Aorta (tissue), 5 donors: ENCODE measurements at regions of chr1 and their contacts with region 1.

Region 1: GRCh38 chr1:156625436-156626078 is 6.3 kb downstream of the HAPLN2 start:
- DNase-seq: peak; percentile 65 to 89
- ATAC-seq: peak; percentile 77
- H3K4me3 ChIP-seq: no peak overlapping the region
- H3K27ac ChIP-seq: no peak overlapping the region
- H3K4me1 ChIP-seq: no peaks in the 10 kb centered on the region
- H3K27me3 ChIP-seq: no peaks in the 10 kb centered on the region

Region 2: GRCh38 chr1:156414461-156415064 is 211.0 kb before region 1 on chr1:
- intact Hi-C with region 1: no loop called
- DNase-seq: no peak
- ATAC-seq: no peak
- H3K4me3 ChIP-seq: no peak overlapping the region
- H3K27ac ChIP-seq: no peak overlapping the region
- H3K4me1 ChIP-seq: no peaks in the 10 kb centered on the region
- H3K27me3 ChIP-seq: peaks cover 0 to 1% of the 10 kb centered on the region in 2 donors

Region 3: DNA sequence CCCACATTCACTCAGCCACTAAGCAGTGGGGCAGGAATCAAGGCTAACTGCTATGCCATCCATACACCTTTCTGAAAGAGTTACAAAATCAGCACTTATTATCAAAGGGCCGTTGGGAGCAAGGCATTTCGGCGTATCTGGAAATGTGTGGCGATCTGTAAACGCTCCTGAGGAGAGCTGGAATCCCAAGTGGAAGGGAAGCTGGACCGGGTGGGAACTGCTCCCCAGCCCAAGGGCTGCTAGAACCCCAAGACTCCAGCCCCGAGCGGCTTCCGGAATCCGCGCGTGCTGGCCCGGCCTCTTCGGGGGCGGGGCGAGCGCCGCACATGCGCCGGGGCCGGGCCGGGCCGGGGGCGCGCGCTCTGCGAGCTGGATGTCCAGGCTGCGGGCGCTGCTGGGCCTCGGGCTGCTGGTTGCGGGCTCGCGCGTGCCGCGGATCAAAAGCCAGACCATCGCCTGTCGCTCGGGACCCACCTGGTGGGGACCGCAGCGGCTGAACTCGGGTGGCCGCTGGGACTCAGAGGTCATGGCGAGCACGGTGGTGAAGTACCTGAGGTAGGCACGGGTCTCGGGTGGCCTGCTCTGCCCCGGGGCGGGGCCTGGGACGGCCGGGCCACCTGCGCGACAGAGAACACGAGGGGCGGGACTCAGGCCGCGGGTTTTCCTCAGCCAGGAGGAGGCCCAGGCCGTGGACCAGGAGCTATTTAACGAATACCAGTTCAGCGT is 34.0 kb before region 1 on chr1 and contains the start of gene NAXE:
- intact Hi-C with region 1: no loop called
- DNase-seq: peak; percentile 81 to 90
- ATAC-seq: peak; percentile 94
- H3K4me3 ChIP-seq: peak within 1 kb of the TSS; percentile 71 to 77
- H3K27ac ChIP-seq: peak within 1 kb of the TSS; percentile 23 to 91
- H3K4me1 ChIP-seq: no peaks in the 10 kb centered on the region
- H3K27me3 ChIP-seq: no peaks in the 10 kb centered on the region
- total RNA-seq, gene NAXE: 41.5 to 46.0 TPM

Region 4: DNA sequence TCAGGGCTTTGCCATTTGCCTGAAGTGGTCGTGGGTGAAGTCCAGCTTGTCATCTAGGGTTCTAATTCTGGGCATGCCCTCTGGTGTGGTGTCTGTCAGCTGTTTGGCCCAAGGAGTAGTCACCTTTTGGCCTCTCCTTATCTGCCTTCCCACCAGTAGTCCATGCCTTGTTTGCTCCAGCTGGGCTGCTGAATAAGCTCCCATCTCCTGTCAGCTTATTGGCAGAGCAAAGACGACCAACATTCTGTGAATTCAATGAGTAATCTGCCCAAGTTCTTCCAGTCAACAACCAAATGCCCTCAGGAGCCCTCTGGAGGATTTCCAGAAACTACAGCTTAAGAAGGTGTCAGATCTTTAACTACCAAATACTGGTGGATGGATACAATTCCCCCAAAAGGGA is 23.4 kb after region 1 on chr1:
- intact Hi-C with region 1: loop called in 1 of 2 experiments (anchors 2 kb)
- DNase-seq: no peak
- ATAC-seq: no peak
- H3K4me3 ChIP-seq: no peak overlapping the region
- H3K27ac ChIP-seq: no peak overlapping the region
- H3K4me1 ChIP-seq: no peaks in the 10 kb centered on the region
- H3K27me3 ChIP-seq: no peaks in the 10 kb centered on the region

Region 5: GRCh38 chr1:156677616-156678596 is 52.3 kb after region 1 on chr1:
- intact Hi-C with region 1: loop called in 1 of 2 experiments (anchors 1 kb)
- DNase-seq: peak; percentile 82 to 88
- ATAC-seq: peak; percentile 89
- H3K4me3 ChIP-seq: no peak overlapping the region
- H3K27ac ChIP-seq: no peak overlapping the region
- H3K4me1 ChIP-seq: no peaks in the 10 kb centered on the region
- H3K27me3 ChIP-seq: no peaks in the 10 kb centered on the region